GM12878 (cell line): ENCODE measurements at regions of chr2 and their contacts with region 1.

Region 1: GRCh38 chr2:173027181-173028128 is 48.2 kb upstream of the MAP3K20 start:
- DNase-seq: peak; percentile 41
- ATAC-seq: peak; percentile 85
- H3K4me3 ChIP-seq: no peak overlapping the region
- H3K27ac ChIP-seq: no peak overlapping the region
- H3K4me1 ChIP-seq: no peaks in the 10 kb centered on the region
- H3K27me3 ChIP-seq: peaks cover 0 to 2% of the 10 kb centered on the region in 2 experiments; a peak in 2 of 4 replicates
- CTCF ChIP-seq: peak; percentile 84 to 95 (median 92)
- EP300 ChIP-seq: no peak
- POLR2A ChIP-seq: no peak
- RAD21 ChIP-seq: peak; percentile 98

Region 2: DNA sequence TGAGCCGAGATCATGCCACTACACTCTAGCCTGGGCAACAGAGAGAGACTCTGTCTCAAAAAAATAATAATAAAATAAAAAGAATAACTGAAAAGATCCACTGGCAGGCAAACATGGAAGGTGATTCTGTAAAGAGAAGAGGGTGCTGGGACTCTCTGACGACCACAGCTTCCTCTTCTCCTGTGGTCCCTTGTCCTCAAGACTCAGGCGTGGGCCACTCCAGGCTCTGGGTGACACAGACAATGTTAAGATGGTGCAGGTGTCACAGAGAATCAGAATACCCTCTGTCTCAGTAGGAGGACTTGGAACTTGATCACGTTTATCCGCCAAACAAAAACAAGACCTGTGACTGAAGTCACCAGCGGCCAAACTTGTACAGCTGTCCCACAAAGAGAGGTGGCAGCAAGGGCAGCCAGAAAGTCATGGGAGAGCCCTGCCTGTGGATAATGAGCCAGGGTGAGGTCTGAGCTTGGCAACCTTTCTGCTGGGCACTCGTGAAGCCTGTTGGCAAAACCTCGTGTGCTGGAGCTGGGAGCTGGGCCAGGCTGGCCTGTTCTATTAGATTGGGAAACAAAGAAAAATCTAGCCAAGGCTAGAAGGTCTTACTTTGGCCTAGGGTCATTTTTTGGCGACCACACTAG is 676.5 kb before region 1 on chr2:
- CTCF ChIA-PET with region 1: no interaction called
- POLR2A ChIA-PET with region 1: no interaction called
- RAD21 ChIA-PET with region 1: no interaction called
- SMC1A ChIA-PET with region 1: no interaction called
- in situ Hi-C with region 1: no loop called
- intact Hi-C with region 1: no loop called
- DNase-seq: no peak
- ATAC-seq: no peak
- H3K4me3 ChIP-seq: no peak overlapping the region
- H3K27ac ChIP-seq: no peak overlapping the region
- H3K4me1 ChIP-seq: no peaks in the 10 kb centered on the region
- H3K27me3 ChIP-seq: no peaks in the 10 kb centered on the region; a peak in 1 of 4 replicates
- CTCF ChIP-seq: no peak
- EP300 ChIP-seq: no peak
- POLR2A ChIP-seq: no peak
- RAD21 ChIP-seq: no peak

Region 3: GRCh38 chr2:173210270-173211196 is 183.1 kb after region 1 on chr2:
- CTCF ChIA-PET with region 1: interaction called, 132 read pairs
- POLR2A ChIA-PET with region 1: no interaction called
- RAD21 ChIA-PET with region 1: interaction called, 42 read pairs
- SMC1A ChIA-PET with region 1: interaction called, 62 read pairs
- in situ Hi-C with region 1: loop called (anchors 5 kb)
- intact Hi-C with region 1: loop called (anchors 1 kb)
- DNase-seq: peak; percentile 40
- ATAC-seq: peak; percentile 87
- H3K4me3 ChIP-seq: no peak overlapping the region
- H3K27ac ChIP-seq: no peak overlapping the region
- H3K4me1 ChIP-seq: no peaks in the 10 kb centered on the region
- H3K27me3 ChIP-seq: no peaks in the 10 kb centered on the region; a peak in 1 of 4 replicates
- CTCF ChIP-seq: peak; percentile 78 to 90 (median 89)
- EP300 ChIP-seq: no peak
- POLR2A ChIP-seq: no peak
- RAD21 ChIP-seq: peak; percentile 94

Region 4: DNA sequence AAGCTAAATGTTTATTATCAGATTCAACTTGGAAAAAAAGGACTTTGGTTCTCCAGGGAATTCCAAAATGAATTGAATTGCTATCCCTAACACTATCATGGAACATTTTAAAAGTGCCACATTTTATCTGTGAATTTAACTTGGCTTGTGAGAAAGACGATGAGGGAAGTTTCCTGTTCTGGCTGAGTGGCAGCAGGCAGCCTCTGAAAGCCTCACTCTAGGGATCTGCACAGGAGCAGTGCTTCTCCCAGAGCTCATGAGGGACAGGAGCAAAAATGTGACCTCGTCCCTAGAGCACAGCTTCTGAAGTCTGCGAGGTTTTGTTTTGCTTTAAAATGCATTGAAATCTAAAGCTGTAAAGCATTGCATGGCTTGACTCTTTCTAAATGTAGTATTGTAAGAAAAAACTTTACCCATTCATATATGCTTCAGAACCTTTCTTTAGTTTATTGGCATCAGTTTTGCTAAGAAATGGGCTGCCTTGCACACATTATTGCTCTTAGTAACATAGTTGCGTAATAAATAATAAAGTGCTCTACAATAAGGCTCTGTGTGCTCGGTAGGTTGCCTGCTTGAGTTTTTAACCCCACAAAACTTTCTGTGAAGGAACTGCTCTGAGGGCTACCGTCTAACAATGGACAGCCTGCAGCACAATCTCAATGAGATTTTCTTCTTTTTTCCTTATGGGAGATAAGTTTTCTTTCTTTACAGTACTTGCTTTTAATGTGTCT is 191.0 kb after region 1 on chr2:
- CTCF ChIA-PET with region 1: interaction called, 17 read pairs
- POLR2A ChIA-PET with region 1: no interaction called
- RAD21 ChIA-PET with region 1: interaction called, 3 read pairs
- SMC1A ChIA-PET with region 1: interaction called, 5 read pairs
- in situ Hi-C with region 1: loop called (anchors 5 kb)
- intact Hi-C with region 1: no loop called
- DNase-seq: no peak
- ATAC-seq: no peak
- H3K4me3 ChIP-seq: no peak overlapping the region
- H3K27ac ChIP-seq: no peak overlapping the region
- H3K4me1 ChIP-seq: no peaks in the 10 kb centered on the region
- H3K27me3 ChIP-seq: no peaks in the 10 kb centered on the region; a peak in 1 of 4 replicates
- CTCF ChIP-seq: no peak
- EP300 ChIP-seq: no peak
- POLR2A ChIP-seq: no peak
- RAD21 ChIP-seq: no peak

Region 5: DNA sequence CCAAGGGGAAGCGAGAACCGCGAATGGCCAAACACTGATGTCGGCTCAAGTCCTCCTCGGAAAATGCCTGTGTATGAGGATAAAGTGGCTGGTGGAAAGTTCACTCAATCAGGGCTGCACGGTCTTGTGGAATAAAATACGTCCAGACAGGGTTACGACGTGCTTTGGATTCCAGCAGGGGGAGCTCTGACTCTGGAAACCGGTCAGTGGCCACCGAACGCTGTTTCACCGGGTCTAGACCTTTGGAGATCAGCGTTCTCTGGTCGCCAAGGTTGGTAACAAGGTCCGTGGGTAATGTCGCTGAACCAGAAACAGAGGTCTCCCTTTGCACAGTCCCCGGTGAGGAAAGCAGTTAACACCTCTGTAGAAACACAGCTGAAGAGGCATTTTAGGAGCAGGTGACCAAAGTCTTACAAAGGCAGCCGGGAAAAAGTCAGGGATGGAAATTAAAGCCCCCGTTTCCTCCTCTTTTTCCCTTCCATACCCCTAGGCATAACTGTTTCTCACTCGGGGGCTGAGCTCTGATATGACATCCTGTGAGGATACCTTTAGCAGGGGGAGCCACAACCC is 375.0 kb after region 1 on chr2:
- CTCF ChIA-PET with region 1: interaction called, 7 read pairs
- POLR2A ChIA-PET with region 1: no interaction called
- RAD21 ChIA-PET with region 1: interaction called, 8 read pairs
- SMC1A ChIA-PET with region 1: interaction called, 11 read pairs
- in situ Hi-C with region 1: no loop called
- intact Hi-C with region 1: loop called (anchors 10 kb)
- DNase-seq: peak; percentile 15
- ATAC-seq: peak; percentile 99
- H3K4me3 ChIP-seq: no peak overlapping the region
- H3K27ac ChIP-seq: no peak overlapping the region
- H3K4me1 ChIP-seq: no peaks in the 10 kb centered on the region
- H3K27me3 ChIP-seq: peaks cover 1 to 6% of the 10 kb centered on the region in 2 experiments; a peak in 3 of 4 replicates
- CTCF ChIP-seq: peak; percentile 81 to 94 (median 88)
- EP300 ChIP-seq: no peak
- POLR2A ChIP-seq: no peak
- RAD21 ChIP-seq: peak; percentile 93

Region 6: DNA sequence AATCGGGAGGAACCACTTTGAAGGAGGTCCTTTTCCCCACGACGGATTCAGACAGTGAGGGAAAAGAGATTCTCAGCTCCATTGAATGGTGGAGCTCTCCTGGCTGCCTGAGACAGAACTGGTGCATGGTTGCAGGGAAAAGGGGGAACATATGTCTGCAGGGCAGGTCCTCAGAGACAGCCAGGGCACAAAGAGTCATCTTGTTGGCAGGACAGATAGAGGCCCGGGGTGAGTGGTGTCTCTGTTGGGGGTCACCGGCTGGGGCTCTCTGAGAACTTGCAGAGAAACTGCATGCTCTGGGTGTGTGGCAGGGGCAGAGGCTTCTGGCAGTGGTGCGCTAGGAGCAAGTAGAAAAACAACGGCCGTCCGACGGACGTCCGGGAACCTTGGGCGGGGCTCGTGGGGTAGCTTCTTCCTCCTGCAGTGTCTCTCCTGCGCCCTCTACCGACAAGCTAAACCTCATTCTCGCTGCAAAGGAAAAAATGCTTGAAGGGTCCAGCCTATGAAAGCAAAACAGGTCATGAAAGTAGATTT is 421.6 kb after region 1 on chr2:
- CTCF ChIA-PET with region 1: interaction called, 26 read pairs
- POLR2A ChIA-PET with region 1: no interaction called
- RAD21 ChIA-PET with region 1: interaction called, 6 read pairs
- SMC1A ChIA-PET with region 1: interaction called, 23 read pairs
- in situ Hi-C with region 1: no loop called
- intact Hi-C with region 1: loop called (anchors 1 kb)
- DNase-seq: peak; percentile 34
- ATAC-seq: peak; percentile 94
- H3K4me3 ChIP-seq: no peak overlapping the region
- H3K27ac ChIP-seq: no peak overlapping the region
- H3K4me1 ChIP-seq: no peaks in the 10 kb centered on the region
- H3K27me3 ChIP-seq: no peaks in the 10 kb centered on the region; a peak in 1 of 4 replicates
- CTCF ChIP-seq: peak; percentile 48 to 74 (median 56)
- EP300 ChIP-seq: no peak
- POLR2A ChIP-seq: no peak
- RAD21 ChIP-seq: peak; percentile 63